ENCODE measurements at regions of chr6 and their contacts with region 1.

Region 1: DNA sequence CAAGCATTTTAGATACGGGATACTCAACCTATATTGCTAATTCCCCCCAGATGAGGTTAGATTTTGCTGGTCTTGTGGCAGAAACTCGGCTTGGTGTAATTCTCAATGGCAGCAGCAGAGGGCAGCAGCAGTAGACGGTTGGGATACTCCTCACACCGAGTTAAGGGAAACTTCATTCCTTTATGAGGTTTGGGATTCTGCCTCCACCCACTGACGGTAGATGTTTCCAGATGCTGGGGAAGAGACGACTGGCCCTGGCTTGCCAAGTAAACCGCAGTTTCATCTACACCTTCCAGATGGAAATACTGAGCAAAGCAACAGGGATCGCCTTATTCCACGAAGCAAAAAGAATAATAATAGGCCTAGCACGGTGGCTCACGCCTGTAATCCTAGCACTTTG is 8.2 kb upstream of the TBC1D7 start:
- DNase-seq: no peak
- ATAC-seq: peak; percentile 82
- H3K4me3 ChIP-seq: no peak overlapping the region
- H3K27ac ChIP-seq: no peak overlapping the region
- H3K4me1 ChIP-seq: peaks cover 15% of the 10 kb centered on the region; the same call in 1 of the 2 replicates
- H3K27me3 ChIP-seq: no peaks in the 10 kb centered on the region
- CTCF ChIP-seq: peak; percentile 90 to 95 (median 94); a peak in 5 of 6 replicates
- EP300 ChIP-seq: no peak
- POLR2A ChIP-seq: no peak
- RAD21 ChIP-seq: peak; percentile 98

Region 2: GRCh38 chr6:12791371-12792000 is 545.1 kb before region 1 on chr6:
- CTCF ChIA-PET with region 1: no interaction called
- POLR2A ChIA-PET with region 1: no interaction called
- RAD21 ChIA-PET with region 1: no interaction called
- SMC1A ChIA-PET with region 1: no interaction called
- in situ Hi-C with region 1: no loop called
- intact Hi-C with region 1: no loop called
- DNase-seq: no peak
- ATAC-seq: no peak
- H3K4me3 ChIP-seq: no peak overlapping the region
- H3K27ac ChIP-seq: no peak overlapping the region
- H3K4me1 ChIP-seq: no peaks in the 10 kb centered on the region
- H3K27me3 ChIP-seq: peaks cover 0 to 3% of the 10 kb centered on the region in 2 experiments; a peak in 1 of 4 replicates
- CTCF ChIP-seq: no peak
- EP300 ChIP-seq: no peak
- POLR2A ChIP-seq: no peak
- RAD21 ChIP-seq: no peak

Region 3: GRCh38 chr6:13355043-13355951 is 18.7 kb after region 1 on chr6:
- CTCF ChIA-PET with region 1: interaction called, 40 read pairs
- POLR2A ChIA-PET with region 1: interaction called, 8 read pairs
- RAD21 ChIA-PET with region 1: interaction called, 54 read pairs
- SMC1A ChIA-PET with region 1: interaction called, 66 read pairs
- in situ Hi-C with region 1: no loop called
- intact Hi-C with region 1: no loop called
- DNase-seq: peak; percentile 66
- ATAC-seq: peak; percentile 79
- H3K4me3 ChIP-seq: peak overlapping the region; percentile 58
- H3K27ac ChIP-seq: peak overlapping the region; percentile 94
- H3K4me1 ChIP-seq: peaks cover 36% of the 10 kb centered on the region
- H3K27me3 ChIP-seq: no peaks in the 10 kb centered on the region
- CTCF ChIP-seq: no peak
- EP300 ChIP-seq: 0 out of 4 replicates have a peak, but pooled peaks of 1 of the 2 experiments have one; percentile 25
- POLR2A ChIP-seq: no peak
- RAD21 ChIP-seq: no peak

Region 4: DNA sequence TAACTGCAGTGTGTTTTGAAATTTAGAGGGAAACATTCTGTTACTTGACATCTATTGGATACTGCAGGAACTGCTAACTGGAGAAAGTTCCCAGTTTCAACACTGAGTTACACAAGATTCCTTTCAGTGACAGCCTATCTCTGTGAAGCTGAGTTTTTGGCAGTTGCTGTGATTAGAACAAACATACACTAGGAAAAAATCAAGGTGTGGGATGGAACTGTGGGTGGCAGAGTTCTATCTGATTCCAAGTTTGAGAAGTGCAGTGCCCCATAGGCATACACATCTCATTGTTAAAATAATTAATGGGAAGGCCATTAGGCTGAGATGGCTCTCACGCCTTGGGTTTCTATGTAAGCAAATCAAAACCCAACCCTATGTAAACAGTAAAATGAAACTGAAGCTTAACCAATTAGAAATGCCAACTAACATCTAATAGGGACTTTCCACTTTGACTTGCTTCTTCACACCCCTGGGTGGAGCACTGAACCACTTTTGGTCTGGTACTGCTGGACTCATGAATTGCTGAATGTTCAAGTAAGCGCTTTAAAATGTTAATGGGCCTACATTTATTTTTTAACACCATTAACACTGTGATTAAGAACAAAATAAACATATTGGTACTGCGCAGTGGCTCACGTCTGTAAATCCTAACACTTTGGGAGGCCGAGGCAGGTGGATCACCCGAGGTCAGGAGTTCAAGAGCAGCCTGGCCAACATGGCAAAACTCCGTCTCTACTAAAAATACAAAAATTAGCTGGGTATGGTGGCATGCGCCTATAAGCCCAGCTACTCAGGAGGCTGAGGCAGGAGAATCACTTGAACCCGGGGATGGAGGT is 47.0 kb after region 1 on chr6:
- CTCF ChIA-PET with region 1: interaction called, 31 read pairs
- POLR2A ChIA-PET with region 1: interaction called, 6 read pairs
- RAD21 ChIA-PET with region 1: interaction called, 22 read pairs
- SMC1A ChIA-PET with region 1: interaction called, 72 read pairs
- in situ Hi-C with region 1: no loop called
- intact Hi-C with region 1: loop called (anchors 2 kb)
- DNase-seq: peak; percentile 91
- ATAC-seq: peak; percentile 98
- H3K4me3 ChIP-seq: no peak overlapping the region
- H3K27ac ChIP-seq: peak overlapping the region; percentile 93
- H3K4me1 ChIP-seq: peaks cover 45% of the 10 kb centered on the region
- H3K27me3 ChIP-seq: no peaks in the 10 kb centered on the region
- CTCF ChIP-seq: peak; percentile 40 to 67 (median 48); a peak in 5 of 6 replicates
- EP300 ChIP-seq: peak in 1 of 2 experiments; percentile 54; a peak in 2 of 4 replicates
- POLR2A ChIP-seq: no peak
- RAD21 ChIP-seq: peak; percentile 83

Region 5: DNA sequence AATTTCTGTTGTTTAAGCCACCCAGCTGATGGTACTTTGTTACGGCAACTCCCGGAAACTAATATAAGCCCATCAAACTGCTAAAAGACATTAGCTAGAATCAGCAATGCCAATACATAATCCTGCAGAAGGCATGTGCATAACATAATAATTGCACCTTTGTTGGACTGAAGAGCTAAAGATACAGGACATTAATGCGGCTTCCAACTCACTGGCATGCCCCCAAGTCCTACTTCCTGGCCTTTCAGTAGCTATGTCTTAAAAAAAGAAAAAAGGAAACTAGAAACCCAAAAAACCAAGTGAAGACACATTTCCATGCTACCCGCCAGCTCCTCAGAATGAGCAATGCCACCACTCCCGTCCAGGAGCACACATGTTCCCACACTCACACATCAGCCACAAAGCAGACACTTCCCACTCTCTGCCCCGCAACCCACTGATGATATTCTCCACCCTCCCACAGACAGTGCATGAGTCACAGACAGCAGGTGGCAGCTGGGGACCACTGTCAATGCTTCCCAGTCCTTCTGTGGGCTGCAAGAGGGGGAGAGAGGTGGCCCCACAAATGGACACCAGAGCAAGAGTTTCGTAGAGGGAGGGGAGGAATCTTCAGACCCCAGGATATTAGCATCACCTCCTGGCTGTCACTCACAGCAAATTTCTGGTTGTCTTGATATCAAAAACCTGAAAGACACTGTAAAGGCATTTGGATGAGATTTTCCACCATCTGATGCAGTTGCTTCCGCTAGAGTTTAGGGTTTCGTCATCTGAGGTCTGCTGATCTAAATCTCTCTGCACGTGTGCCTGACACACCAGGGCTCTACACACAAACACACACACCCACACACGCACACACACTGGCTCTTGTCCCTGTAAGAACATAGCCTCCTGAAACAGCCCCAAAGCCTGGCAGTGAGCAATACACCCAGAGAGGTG is 118.0 kb after region 1 on chr6:
- CTCF ChIA-PET with region 1: interaction called, 7 read pairs
- POLR2A ChIA-PET with region 1: no interaction called
- RAD21 ChIA-PET with region 1: interaction called, 10 read pairs
- SMC1A ChIA-PET with region 1: interaction called, 33 read pairs
- in situ Hi-C with region 1: no loop called
- intact Hi-C with region 1: no loop called
- DNase-seq: peak; percentile 56
- ATAC-seq: peak; percentile 74
- H3K4me3 ChIP-seq: no peak overlapping the region
- H3K27ac ChIP-seq: peak overlapping the region; percentile 71
- H3K4me1 ChIP-seq: peaks cover 48% of the 10 kb centered on the region
- H3K27me3 ChIP-seq: no peaks in the 10 kb centered on the region
- CTCF ChIP-seq: peak; percentile 27 to 58 (median 33); a peak in 3 of 6 replicates
- EP300 ChIP-seq: no peak
- POLR2A ChIP-seq: peak; percentile 51
- RAD21 ChIP-seq: peak; percentile 64

Region 6: DNA sequence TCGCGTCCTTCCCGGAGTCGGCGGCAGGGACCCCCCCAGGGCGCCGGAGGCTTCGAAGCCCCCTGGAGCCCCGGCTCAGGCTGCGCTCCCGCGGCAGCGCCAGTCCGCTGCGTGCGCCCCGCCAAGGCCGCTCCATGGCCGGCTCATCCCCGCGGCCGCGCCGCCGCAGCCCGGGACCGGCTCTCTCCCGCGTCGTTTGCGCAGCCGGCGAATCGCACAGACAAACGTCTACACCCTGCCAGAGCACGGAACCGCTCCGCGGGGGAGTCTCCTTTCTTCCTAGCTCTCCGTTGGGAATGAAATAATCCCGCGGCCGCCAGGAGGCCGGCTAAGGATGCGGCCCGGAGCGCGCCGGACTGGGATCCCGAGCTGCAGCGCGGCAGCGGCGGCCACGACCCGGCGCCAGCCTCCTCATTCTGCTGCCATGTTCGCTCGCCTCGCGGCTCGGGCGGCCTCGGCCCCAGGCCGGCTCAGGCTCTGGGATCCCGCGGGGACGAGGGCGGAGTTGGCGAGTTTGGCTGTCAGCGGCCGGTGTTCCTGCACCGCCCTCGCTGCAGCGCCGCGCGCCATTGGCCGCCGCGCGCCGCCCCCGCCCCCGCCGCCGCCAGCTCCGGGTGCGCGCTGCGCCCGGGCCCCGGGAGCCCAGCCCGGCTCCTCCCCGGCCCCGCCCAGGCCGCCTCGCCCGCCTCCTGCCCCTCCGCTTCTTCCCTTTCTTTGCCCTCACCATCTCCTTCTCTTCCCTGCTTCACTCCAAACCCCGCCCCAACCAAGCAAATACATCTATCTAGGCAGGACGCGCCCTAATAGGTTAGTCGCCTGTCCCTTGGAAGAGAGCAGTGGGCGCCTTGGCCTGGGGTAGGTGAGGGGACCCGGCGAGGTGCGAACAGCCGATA is 150.8 kb after region 1 on chr6 and contains the start of gene GFOD1:
- CTCF ChIA-PET with region 1: interaction called, 9 read pairs
- POLR2A ChIA-PET with region 1: no interaction called
- RAD21 ChIA-PET with region 1: interaction called, 12 read pairs
- SMC1A ChIA-PET with region 1: interaction called, 7 read pairs
- in situ Hi-C with region 1: no loop called
- intact Hi-C with region 1: loop called (anchors 5 kb)
- DNase-seq: no peak
- ATAC-seq: peak; percentile 80
- H3K4me3 ChIP-seq: peak within 1 kb of the TSS; percentile 100
- H3K27ac ChIP-seq: peak within 1 kb of the TSS; percentile 69
- H3K4me1 ChIP-seq: peaks cover 15% of the 10 kb centered on the region
- H3K27me3 ChIP-seq: no peaks in the 10 kb centered on the region
- CTCF ChIP-seq: no peak
- EP300 ChIP-seq: no peak
- POLR2A ChIP-seq: peak; percentile 86
- RAD21 ChIP-seq: no peak
- polyA plus RNA-seq, gene GFOD1: 6.5 to 7.9 TPM

Region 7: GRCh38 chr6:13538084-13538483 is 201.5 kb after region 1 on chr6:
- CTCF ChIA-PET with region 1: interaction called, 47 read pairs
- POLR2A ChIA-PET with region 1: no interaction called
- RAD21 ChIA-PET with region 1: interaction called, 21 read pairs
- SMC1A ChIA-PET with region 1: interaction called, 54 read pairs
- in situ Hi-C with region 1: no loop called
- intact Hi-C with region 1: loop called (anchors 1 kb)
- DNase-seq: no peak
- ATAC-seq: peak; percentile 80
- H3K4me3 ChIP-seq: no peak overlapping the region
- H3K27ac ChIP-seq: no peak overlapping the region
- H3K4me1 ChIP-seq: no peaks in the 10 kb centered on the region
- H3K27me3 ChIP-seq: no peaks in the 10 kb centered on the region
- CTCF ChIP-seq: peak; percentile 27 to 49 (median 36); a peak in 4 of 6 replicates
- EP300 ChIP-seq: no peak
- POLR2A ChIP-seq: no peak
- RAD21 ChIP-seq: peak; percentile 61